Posterior vena cava (tissue), 2 donors: ENCODE measurements at regions of chr2 and their contacts with region 1.

Region 1: DNA sequence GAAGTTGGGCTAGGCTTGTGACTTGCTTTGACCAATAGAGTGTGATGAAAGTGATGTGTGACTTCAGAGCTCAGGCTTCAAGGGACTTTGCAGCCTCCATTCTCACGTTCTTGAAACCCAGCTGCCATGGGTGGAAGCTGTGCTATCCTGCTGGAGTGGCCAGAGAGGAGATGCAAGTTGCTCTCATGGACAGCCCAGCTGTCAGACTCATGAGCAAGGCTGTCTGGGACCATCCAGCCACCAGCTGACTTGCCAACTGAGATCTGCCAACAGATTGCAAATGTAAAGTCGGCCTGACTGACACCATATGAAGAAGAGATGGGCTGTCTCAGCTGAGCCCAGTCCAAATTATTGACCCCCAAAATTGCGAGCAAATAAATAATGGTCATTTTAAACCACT is 226.4 kb upstream of the CXCR4 start:
- DNase-seq: no peak

Region 2: DNA sequence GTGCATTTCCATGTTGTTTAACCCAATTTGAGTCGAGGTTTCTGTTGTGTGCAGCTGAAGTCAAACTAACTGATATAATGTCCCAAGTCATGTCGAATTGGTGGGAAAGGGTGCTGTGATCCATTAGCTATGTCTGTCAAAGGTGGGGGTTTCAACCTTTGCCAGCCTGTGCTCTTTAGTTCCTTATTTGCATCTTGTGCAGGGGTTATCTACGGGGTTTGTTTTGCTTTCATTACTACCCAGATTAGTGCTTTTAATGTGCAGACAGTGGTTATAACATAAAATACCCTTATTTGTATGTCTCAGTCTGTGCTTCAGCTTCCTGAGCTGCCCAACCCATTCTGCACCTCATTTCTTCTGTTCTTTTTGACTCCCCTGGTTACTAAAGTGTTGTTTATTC is 45.5 kb after region 1 on chr2:
- intact Hi-C with region 1: loop called in 1 of 2 experiments (anchors 2 kb)
- DNase-seq: no peak

Region 3: DNA sequence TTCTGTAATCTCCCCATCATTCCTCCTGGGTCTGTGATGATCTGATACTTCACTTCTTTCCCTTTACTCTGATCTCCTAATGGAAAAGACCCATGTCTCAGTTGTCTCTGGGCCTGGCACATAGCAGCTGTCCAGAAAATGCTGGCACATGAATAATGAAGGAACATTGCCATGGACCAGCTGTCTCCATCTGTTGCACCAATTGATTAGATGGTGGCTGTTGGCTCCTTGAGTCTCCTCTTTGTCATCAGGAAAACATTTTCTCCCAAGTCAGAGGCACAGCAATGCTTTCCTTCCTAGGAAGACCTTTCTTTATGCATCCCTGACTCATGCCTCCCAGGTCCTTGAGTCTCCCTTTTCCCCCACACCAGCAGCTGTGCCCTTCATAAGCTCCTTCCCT is 59.8 kb after region 1 on chr2:
- intact Hi-C with region 1: no loop called
- DNase-seq: no peak

Region 4: DNA sequence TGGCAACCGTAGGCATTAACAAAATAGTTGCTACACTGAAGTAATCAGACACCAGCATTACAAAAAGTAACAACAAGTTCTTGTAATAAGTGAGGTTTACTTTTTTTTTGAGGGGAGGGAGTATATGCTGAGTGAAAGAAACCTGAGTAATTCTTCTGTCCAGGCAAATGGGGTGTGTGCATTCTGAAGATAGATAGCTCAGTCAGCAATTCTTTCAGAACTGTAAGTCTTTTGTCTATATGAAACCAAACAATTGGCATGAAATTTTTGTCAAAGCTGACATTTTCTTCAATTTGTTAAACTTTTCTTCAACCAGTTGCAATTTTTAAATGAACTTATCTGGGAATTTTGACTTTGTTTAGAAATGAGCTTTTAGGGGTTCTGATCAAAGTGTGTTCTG is 212.9 kb after region 1 on chr2:
- intact Hi-C with region 1: no loop called
- DNase-seq: no peak